Vagina (tissue), 2 donors: ENCODE measurements at regions of chr14 and their contacts with region 1.

Region 1: GRCh38 chr14:61726778-61727658 is 31.7 kb downstream of the HIF1A start:
- DNase-seq: no peak
- H3K4me3 ChIP-seq: no peak overlapping the region
- H3K27ac ChIP-seq: no peak overlapping the region
- H3K4me1 ChIP-seq: no peaks in the 10 kb centered on the region
- H3K27me3 ChIP-seq: no peaks in the 10 kb centered on the region
- CTCF ChIP-seq: no peak
- POLR2A ChIP-seq: no peak

Region 2: GRCh38 chr14:61461808-61462275 is 265.2 kb before region 1 on chr14:
- intact Hi-C with region 1: loop called (anchors 5 kb)
- DNase-seq: peak in 1 of 2 donors; percentile 83
- H3K4me3 ChIP-seq: no peak overlapping the region
- H3K27ac ChIP-seq: no peak overlapping the region
- H3K4me1 ChIP-seq: peaks cover 18% of the 10 kb centered on the region
- H3K27me3 ChIP-seq: no peaks in the 10 kb centered on the region
- CTCF ChIP-seq: peak; percentile 71 to 82 (median 73)
- POLR2A ChIP-seq: no peak